CD4-positive, alpha-beta memory T cell (primary cell): ENCODE measurements at regions of chr20 and their contacts with region 1.

Region 1: DNA sequence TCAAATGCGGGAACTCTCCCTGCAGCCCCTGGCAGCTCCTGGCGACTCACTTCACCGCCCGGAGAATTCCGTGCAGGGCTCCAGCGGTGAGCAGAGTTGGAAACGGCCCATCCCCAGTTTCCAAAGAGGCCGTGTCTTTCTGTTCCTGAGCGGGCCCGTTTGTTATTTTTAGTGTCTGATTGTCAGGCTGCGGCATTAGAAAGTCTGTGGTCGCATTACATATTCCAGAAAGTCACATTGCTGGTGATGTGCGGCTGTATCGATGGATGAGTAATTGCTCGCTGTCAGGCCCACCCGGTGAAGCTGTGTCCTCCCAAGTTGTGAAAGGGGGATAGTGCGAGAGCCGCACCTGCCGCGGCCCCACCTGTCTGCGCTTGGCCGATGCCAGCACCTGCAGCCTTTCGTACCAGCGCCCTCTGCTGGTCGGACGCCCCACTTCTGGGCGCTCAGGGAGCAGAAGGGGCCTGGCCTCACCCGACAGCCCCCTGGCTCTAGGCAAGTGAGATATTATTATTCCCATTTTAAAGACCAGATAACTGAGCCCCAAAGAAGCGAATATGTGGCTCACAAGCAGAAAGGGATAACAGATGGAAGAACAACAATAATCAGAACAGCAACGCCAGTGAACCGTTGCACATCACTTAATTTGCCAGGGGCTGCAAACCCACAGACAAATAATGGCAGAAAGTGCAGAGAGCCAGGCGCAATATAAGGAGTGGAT is 244.9 kb downstream of the TSHZ2 start:
- DNase-seq: peak; percentile 65 to 76 (median 69)
- H3K4me3 ChIP-seq: peak overlapping the region in 1 of 2 donors; percentile 15
- H3K4me3 Mint-ChIP-seq: peak overlapping the region; percentile 67 to 83 (median 74)
- H3K27ac ChIP-seq: no peak overlapping the region
- H3K27ac Mint-ChIP-seq: peak overlapping the region; percentile 36 to 88 (median 57)
- H3K4me1 ChIP-seq: peaks cover 31% of the 10 kb centered on the region
- H3K4me1 Mint-ChIP-seq: peaks cover 11 to 28% (median 23%) of the 10 kb centered on the region in 4 donors
- H3K27me3 ChIP-seq: no peaks in the 10 kb centered on the region
- H3K27me3 Mint-ChIP-seq: no peaks in the 10 kb centered on the region

Region 2: GRCh38 chr20:52242237-52243230 is 974.5 kb before region 1 on chr20:
- CTCF ChIA-PET with region 1: interaction called, 6 read pairs
- POLR2A ChIA-PET with region 1: no interaction called
- intact Hi-C with region 1: loop called (anchors 1 kb)
- DNase-seq: peak in 4 of 5 donors; percentile 29 to 39 (median 36)
- H3K4me3 ChIP-seq: no peak overlapping the region
- H3K4me3 Mint-ChIP-seq: no peak overlapping the region
- H3K27ac ChIP-seq: no peak overlapping the region
- H3K27ac Mint-ChIP-seq: no peak overlapping the region
- H3K4me1 ChIP-seq: no peaks in the 10 kb centered on the region
- H3K4me1 Mint-ChIP-seq: no peaks in the 10 kb centered on the region
- H3K27me3 ChIP-seq: no peaks in the 10 kb centered on the region
- H3K27me3 Mint-ChIP-seq: peaks cover 0 to 2% of the 10 kb centered on the region in 2 donors

Region 3: GRCh38 chr20:52305858-52306257 is 911.2 kb before region 1 on chr20:
- CTCF ChIA-PET with region 1: interaction called, 115 read pairs
- POLR2A ChIA-PET with region 1: interaction called, 3 read pairs
- intact Hi-C with region 1: no loop called
- DNase-seq: peak in 4 of 5 donors; percentile 20 to 41 (median 34)
- H3K4me3 ChIP-seq: no peak overlapping the region
- H3K4me3 Mint-ChIP-seq: peak overlapping the region in 6 of 8 donors; percentile 7 to 52 (median 26)
- H3K27ac ChIP-seq: no peak overlapping the region
- H3K27ac Mint-ChIP-seq: peak overlapping the region in 6 of 7 donors; percentile 5 to 76 (median 54)
- H3K4me1 ChIP-seq: peaks cover 20% of the 10 kb centered on the region
- H3K4me1 Mint-ChIP-seq: peaks cover 20 to 32% (median 26%) of the 10 kb centered on the region in 4 donors
- H3K27me3 ChIP-seq: no peaks in the 10 kb centered on the region
- H3K27me3 Mint-ChIP-seq: peaks cover 0 to 2% of the 10 kb centered on the region in 2 donors

Region 4: DNA sequence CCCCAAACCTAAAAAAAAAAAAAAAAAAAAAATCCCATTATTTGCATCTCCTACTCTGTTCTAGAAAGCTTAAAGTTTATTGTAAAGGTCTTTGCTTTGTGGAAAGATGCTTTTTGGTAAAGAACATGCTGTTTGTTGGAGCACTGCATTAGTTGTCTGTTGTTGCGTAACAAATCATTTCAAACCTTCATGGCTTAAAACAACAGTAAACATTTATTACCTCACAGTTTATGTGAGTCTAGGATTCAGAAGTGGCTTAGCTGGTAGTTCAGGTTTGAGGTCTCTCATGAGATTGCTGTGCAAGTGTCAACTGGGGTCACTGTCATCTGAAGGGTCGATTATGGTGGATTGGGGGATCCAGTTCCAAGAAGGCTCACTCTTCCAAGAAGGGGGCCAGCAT is 870.2 kb before region 1 on chr20:
- CTCF ChIA-PET with region 1: interaction called, 6 read pairs
- POLR2A ChIA-PET with region 1: no interaction called
- intact Hi-C with region 1: loop called (anchors 1 kb)
- DNase-seq: no peak
- H3K4me3 ChIP-seq: no peak overlapping the region
- H3K4me3 Mint-ChIP-seq: no peak overlapping the region
- H3K27ac ChIP-seq: no peak overlapping the region
- H3K27ac Mint-ChIP-seq: no peak overlapping the region
- H3K4me1 ChIP-seq: no peaks in the 10 kb centered on the region
- H3K4me1 Mint-ChIP-seq: peaks cover 0 to 5% (median under 1%) of the 10 kb centered on the region in 4 donors
- H3K27me3 ChIP-seq: no peaks in the 10 kb centered on the region
- H3K27me3 Mint-ChIP-seq: peaks cover 0 to 2% of the 10 kb centered on the region in 2 donors

Region 5: GRCh38 chr20:52972190-52972937 is 244.7 kb before region 1 on chr20 and contains the start of gene TSHZ2:
- CTCF ChIA-PET with region 1: no interaction called
- POLR2A ChIA-PET with region 1: interaction called, 7 read pairs
- intact Hi-C with region 1: loop called (anchors 2 kb)
- DNase-seq: peak; percentile 45 to 77 (median 60)
- H3K4me3 ChIP-seq: peak within 1 kb of the TSS; percentile 49 to 63
- H3K4me3 Mint-ChIP-seq: peak within 1 kb of the TSS; percentile 91 to 98 (median 96)
- H3K27ac ChIP-seq: peak within 1 kb of the TSS; percentile 71
- H3K27ac Mint-ChIP-seq: peak within 1 kb of the TSS; percentile 89 to 98 (median 96)
- H3K4me1 ChIP-seq: peaks cover 29% of the 10 kb centered on the region
- H3K4me1 Mint-ChIP-seq: peaks cover 11 to 56% (median 29%) of the 10 kb centered on the region in 4 donors
- H3K27me3 ChIP-seq: no peaks in the 10 kb centered on the region
- H3K27me3 Mint-ChIP-seq: peaks cover 5 to 28% of the 10 kb centered on the region in 2 donors
- total RNA-seq, gene TSHZ2: 30.2 to 31.8 TPM

Region 6: GRCh38 chr20:53021934-53022333 is 195.1 kb before region 1 on chr20:
- CTCF ChIA-PET with region 1: no interaction called
- POLR2A ChIA-PET with region 1: no interaction called
- intact Hi-C with region 1: loop called (anchors 10 kb)
- DNase-seq: peak in 1 of 5 donors; percentile 20
- H3K4me3 ChIP-seq: no peak overlapping the region
- H3K4me3 Mint-ChIP-seq: peak overlapping the region in 6 of 8 donors; percentile 32 to 65 (median 49)
- H3K27ac ChIP-seq: no peak overlapping the region
- H3K27ac Mint-ChIP-seq: peak overlapping the region in 5 of 7 donors; percentile 42 to 87 (median 54)
- H3K4me1 ChIP-seq: peaks cover 10% of the 10 kb centered on the region
- H3K4me1 Mint-ChIP-seq: peaks cover 7 to 35% (median 20%) of the 10 kb centered on the region in 4 donors
- H3K27me3 ChIP-seq: no peaks in the 10 kb centered on the region
- H3K27me3 Mint-ChIP-seq: peaks cover 2 to 9% of the 10 kb centered on the region in 2 donors

Region 7: GRCh38 chr20:53157443-53158408 is 59.3 kb before region 1 on chr20:
- CTCF ChIA-PET with region 1: interaction called, 6 read pairs
- POLR2A ChIA-PET with region 1: no interaction called
- intact Hi-C with region 1: loop called (anchors 1 kb)
- DNase-seq: peak in 4 of 5 donors; percentile 4 to 37 (median 16)
- H3K4me3 ChIP-seq: no peak overlapping the region
- H3K4me3 Mint-ChIP-seq: peak overlapping the region in 2 of 8 donors; percentile 17 to 28
- H3K27ac ChIP-seq: no peak overlapping the region
- H3K27ac Mint-ChIP-seq: no peak overlapping the region
- H3K4me1 ChIP-seq: no peaks in the 10 kb centered on the region
- H3K4me1 Mint-ChIP-seq: peaks cover 6 to 25% (median 9%) of the 10 kb centered on the region in 4 donors
- H3K27me3 ChIP-seq: no peaks in the 10 kb centered on the region
- H3K27me3 Mint-ChIP-seq: peaks cover 0 to 3% of the 10 kb centered on the region in 2 donors